H1 (cell line): ENCODE measurements at regions of chr16 and their contacts with region 1.

Region 1: DNA sequence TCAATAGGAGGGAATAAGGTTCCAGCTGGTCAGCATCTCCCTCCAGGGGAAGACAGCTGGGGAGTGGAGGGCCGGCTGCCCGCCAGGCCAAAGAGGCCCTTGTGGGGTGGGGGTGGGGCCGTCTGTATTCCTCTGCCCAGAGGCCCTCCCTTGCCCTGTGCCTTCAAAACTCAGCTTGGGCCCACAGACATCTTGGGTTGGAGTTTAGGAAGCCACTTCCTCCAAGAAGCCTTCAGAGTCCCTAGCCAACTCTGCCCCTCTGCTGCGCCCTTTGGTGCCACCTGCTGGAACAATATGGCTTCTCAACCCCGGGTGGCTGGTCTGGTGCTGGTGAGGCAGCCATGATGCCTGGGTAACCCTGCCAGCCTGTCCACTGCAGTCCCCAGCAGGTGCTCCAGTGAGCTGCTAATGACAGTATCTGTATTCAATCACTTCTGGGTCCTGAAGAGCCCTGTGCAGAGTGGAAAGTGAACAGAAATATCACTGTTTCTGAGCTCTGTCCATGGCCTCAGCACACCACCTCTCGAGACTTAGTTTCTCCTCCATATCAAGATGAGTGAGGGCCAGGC is 16.7 kb downstream of the HSD11B2 start:
- DNase-seq: peak in 1 of 2 experiments; percentile 77
- H3K4me3 ChIP-seq: no peak overlapping the region
- H3K27ac ChIP-seq: no peak overlapping the region
- H3K4me1 ChIP-seq: peaks cover 0 to 8% (median 4%) of the 10 kb centered on the region in 4 experiments; a peak in 5 of 7 replicates
- H3K27me3 ChIP-seq: no peaks in the 10 kb centered on the region
- CTCF ChIP-seq: peak; percentile 57 to 63 (median 59)
- EP300 ChIP-seq: no peak
- POLR2A ChIP-seq: no peak
- RAD21 ChIP-seq: peak; percentile 40 to 66; a peak in 3 of 4 replicates

Region 2: DNA sequence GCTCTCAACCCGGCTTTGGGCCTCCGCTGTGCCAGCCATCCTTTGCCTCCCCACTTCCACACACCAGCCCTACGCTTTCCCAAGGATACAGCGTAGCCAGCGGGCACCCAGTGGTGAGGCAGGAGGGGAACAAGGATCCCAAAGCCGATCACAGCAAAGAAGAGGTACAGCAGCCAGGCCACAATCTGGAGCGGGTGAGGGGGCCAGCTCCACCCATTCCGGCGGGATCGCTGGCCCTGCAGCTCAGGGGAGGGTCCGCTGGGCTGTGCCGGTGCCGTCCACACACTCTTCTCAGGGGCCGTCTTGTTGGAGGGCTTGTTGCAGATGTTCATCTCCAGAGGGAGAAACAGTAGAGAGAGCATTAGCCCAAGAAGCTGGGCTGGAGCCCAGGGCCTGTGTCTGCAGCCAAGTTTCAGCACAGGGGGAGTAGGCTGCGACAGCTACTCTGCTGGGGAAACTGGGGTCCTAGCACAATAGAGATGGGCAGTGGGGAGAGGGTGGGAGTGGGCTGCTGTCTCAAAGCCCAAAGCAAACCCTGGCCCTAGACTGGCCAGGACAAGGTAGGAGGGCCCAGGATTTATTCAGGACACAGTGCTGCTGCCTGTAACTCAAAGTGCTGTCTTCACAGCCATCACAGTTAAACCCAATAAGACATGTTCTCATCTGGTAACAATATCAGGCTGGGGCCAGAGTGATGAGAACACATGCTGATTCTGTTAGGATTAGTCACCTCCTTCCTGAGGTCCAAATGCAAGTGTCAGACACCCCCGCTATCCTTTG is 41.3 kb before region 1 on chr16:
- CTCF ChIA-PET with region 1: interaction called, 10 read pairs
- POLR2A ChIA-PET with region 1: interaction called, 4 read pairs
- DNase-seq: no peak
- H3K4me3 ChIP-seq: no peak overlapping the region
- H3K27ac ChIP-seq: no peak overlapping the region
- H3K4me1 ChIP-seq: peaks cover 0 to 26% (median 9%) of the 10 kb centered on the region in 4 experiments; a peak in 5 of 7 replicates
- H3K27me3 ChIP-seq: no peaks in the 10 kb centered on the region; a peak in 1 of 7 replicates
- CTCF ChIP-seq: no peak
- EP300 ChIP-seq: no peak
- POLR2A ChIP-seq: no peak
- RAD21 ChIP-seq: no peak

Region 3: GRCh38 chr16:67415872-67416793 is 31.5 kb before region 1 on chr16 and contains the start of gene ZDHHC1:
- CTCF ChIA-PET with region 1: interaction called, 52 read pairs
- POLR2A ChIA-PET with region 1: no interaction called
- DNase-seq: peak in 1 of 2 experiments; percentile 94
- H3K4me3 ChIP-seq: peak within 1 kb of the TSS; percentile 40 to 66 (median 54)
- H3K27ac ChIP-seq: no peak within 1 kb of the TSS
- H3K4me1 ChIP-seq: peaks cover 0 to 10% (median 5%) of the 10 kb centered on the region in 4 experiments; a peak in 4 of 7 replicates
- H3K27me3 ChIP-seq: no peaks in the 10 kb centered on the region; a peak in 2 of 7 replicates
- CTCF ChIP-seq: peak; percentile 62 to 77 (median 66)
- EP300 ChIP-seq: no peak
- POLR2A ChIP-seq: peak in 1 of 2 experiments; percentile 37; a peak in 1 of 3 replicates
- RAD21 ChIP-seq: peak; percentile 54 to 65
- total RNA-seq, gene ZDHHC1: 3.1 and 3.5 TPM in 2 replicates